Sigmoid colon (tissue), 7 donors: ENCODE measurements at regions of chr4 and their contacts with region 1.

Region 1: GRCh38 chr4:102439236-102439614 is 61.9 kb upstream of the NFKB1 start:
- DNase-seq: no peak
- H3K4me3 ChIP-seq: no peak overlapping the region
- H3K27ac ChIP-seq: peak overlapping the region; percentile 32 to 46 (median 42)
- H3K4me1 ChIP-seq: peaks cover 0 to 19% (median 17%) of the 10 kb centered on the region in 4 donors
- H3K27me3 ChIP-seq: no peaks in the 10 kb centered on the region
- CTCF ChIP-seq: no peak
- EP300 ChIP-seq: no peak
- POLR2A ChIP-seq: no peak

Region 2: DNA sequence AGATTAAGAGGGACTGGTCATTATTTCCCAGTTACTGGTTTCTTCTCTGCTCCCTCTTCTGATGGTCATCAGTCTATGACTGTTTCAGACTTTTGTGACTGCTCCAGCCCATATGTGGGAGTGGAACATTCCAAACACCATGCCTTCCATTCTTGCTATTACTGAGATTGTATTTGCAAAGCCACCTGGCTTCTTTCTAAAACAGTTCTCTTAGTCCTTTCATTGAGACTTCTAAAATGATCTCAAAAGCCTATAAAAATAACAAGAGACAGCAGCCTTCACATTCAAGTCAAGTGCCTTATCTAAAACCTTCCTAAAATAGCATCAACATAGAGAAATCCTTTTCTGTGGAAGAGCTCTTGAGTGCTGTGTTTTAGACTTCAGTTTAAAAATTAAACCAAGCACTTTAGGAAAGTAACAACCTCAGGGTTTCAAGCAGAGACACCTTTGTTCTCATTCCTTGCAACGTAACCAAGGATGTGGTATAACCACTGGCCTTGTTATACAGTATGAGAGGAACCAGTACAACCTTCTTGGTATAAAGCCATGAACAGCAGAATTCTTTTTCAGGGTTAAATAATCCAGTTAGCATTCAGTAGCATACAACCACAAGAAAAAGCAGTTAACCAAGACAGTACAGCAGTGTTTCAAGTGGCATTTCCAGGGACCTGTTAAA is 159.0 kb after region 1 on chr4:
- intact Hi-C with region 1: loop called (anchors 10 kb)
- DNase-seq: no peak
- H3K4me3 ChIP-seq: no peak overlapping the region
- H3K27ac ChIP-seq: peak overlapping the region in 1 of 4 donors; percentile 10
- H3K4me1 ChIP-seq: peaks cover 0 to 16% (median 7%) of the 10 kb centered on the region in 4 donors
- H3K27me3 ChIP-seq: no peaks in the 10 kb centered on the region
- CTCF ChIP-seq: no peak
- EP300 ChIP-seq: no peak
- POLR2A ChIP-seq: no peak

Region 3: GRCh38 chr4:102826890-102827673 is 387.9 kb after region 1 on chr4 and contains the start of gene UBE2D3:
- intact Hi-C with region 1: loop called (anchors 5 kb)
- DNase-seq: peak; percentile 99
- H3K4me3 ChIP-seq: peak within 1 kb of the TSS; percentile 90 to 96 (median 93)
- H3K27ac ChIP-seq: peak within 1 kb of the TSS; percentile 99 to 100 (median 100)
- H3K4me1 ChIP-seq: peaks cover 4 to 43% (median 35%) of the 10 kb centered on the region in 4 donors
- H3K27me3 ChIP-seq: no peaks in the 10 kb centered on the region
- CTCF ChIP-seq: no peak
- EP300 ChIP-seq: peak in 2 of 4 donors; percentile 46 to 49
- POLR2A ChIP-seq: peak; percentile 59 to 82
- total RNA-seq, gene UBE2D3: 273 to 404 (median 305) TPM